Naive thymus-derived CD4-positive, alpha-beta T cell (primary cell): ENCODE measurements at regions of chr10 and their contacts with region 1.

Region 1: DNA sequence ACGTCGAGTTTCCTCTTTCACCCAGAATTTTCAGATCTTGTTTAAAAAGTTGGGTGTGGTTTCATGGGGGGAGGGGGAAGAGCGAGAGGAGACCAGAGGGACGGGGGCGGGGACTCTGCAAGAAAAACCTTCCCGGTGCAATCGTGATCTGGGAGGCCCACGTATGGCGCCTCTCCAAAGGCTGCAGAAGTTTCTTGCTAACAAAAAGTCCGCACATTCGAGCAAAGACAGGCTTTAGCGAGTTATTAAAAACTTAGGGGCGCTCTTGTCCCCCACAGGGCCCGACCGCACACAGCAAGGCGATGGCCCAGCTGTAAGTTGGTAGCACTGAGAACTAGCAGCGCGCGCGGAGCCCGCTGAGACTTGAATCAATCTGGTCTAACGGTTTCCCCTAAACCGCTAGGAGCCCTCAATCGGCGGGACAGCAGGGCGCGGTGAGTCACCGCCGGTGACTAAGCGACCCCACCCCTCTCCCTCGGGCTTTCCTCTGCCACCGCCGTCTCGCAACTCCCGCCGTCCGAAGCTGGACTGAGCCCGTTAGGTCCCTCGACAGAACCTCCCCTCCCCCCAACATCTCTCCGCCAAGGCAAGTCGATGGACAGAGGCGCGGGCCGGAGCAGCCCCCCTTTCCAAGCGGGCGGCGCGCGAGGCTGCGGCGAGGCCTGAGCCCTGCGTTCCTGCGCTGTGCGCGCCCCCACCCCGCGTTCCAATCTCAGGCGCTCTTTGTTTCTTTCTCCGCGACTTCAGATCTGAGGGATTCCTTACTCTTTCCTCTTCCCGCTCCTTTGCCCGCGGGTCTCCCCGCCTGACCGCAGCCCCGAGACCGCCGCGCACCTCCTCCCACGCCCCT is at the start of gene VIM:
- DNase-seq: peak; percentile 72 to 84 (median 81)
- ATAC-seq: peak; percentile 40
- H3K4me3 ChIP-seq: peak within 1 kb of the TSS; percentile 93
- H3K4me3 Mint-ChIP-seq: peak within 1 kb of the TSS; percentile 87 to 100 (median 97)
- H3K27ac ChIP-seq: peak within 1 kb of the TSS; percentile 83
- H3K27ac Mint-ChIP-seq: peak within 1 kb of the TSS; percentile 91 to 100 (median 97)
- H3K4me1 ChIP-seq: peaks cover 34 to 39% of the 10 kb centered on the region in 2 donors
- H3K4me1 Mint-ChIP-seq: peaks cover 25 to 61% (median 55%) of the 10 kb centered on the region in 7 donors
- H3K27me3 ChIP-seq: no peaks in the 10 kb centered on the region
- H3K27me3 Mint-ChIP-seq: peaks cover 0 to 3% (median 0%) of the 10 kb centered on the region in 5 donors
- total RNA-seq, gene VIM: 498 to 2,181 (median 1,002) TPM

Region 2: DNA sequence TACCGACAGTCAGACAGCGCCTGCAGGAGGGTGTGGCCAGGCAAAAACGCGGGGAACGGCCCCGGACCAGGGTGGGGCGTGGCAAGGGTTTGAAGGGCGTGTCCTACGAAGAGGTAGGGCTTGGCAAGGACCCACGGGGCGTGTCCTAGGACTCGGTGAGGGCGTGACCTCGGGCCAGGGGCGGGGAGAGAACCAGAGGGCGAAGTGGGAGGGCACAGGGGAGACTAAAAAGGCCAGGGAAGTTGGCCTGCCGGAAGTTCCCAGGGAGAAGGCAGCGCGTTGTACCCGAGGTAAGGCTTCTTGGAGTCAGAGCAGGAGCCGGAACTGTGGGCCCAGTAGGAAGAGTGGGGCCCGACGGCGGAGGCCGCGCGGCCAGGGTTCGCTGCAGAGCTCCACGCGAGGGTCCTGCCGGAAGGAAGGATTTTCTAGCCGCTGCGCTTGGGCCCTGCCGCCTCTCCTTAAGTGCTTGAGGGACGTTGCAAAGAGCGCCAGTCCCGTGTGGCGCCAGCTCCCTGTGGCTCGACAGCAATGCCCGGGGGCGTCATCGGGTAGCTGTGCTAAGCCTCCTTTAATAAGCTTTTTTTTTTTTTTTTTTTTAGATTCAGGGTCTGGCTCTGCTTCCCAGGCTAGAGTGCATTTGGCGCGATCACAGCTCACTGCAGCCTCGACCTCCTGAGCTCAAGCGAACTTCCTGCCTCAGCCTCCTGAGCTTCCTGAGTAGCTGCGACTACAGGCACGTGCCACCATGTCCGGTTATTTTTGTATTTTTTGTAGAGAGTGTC is 791.4 kb before region 1 on chr10 and contains the start of gene PTER:
- CTCF ChIA-PET with region 1: no interaction called
- POLR2A ChIA-PET with region 1: no interaction called
- intact Hi-C with region 1: loop called in 1 of 2 experiments (anchors 2 kb)
- DNase-seq: peak; percentile 92 to 99 (median 94)
- ATAC-seq: peak; percentile 100
- H3K4me3 ChIP-seq: peak within 1 kb of the TSS; percentile 93
- H3K4me3 Mint-ChIP-seq: peak within 1 kb of the TSS; percentile 91 to 99 (median 96)
- H3K27ac ChIP-seq: peak within 1 kb of the TSS; percentile 77
- H3K27ac Mint-ChIP-seq: peak within 1 kb of the TSS; percentile 87 to 97 (median 94)
- H3K4me1 ChIP-seq: peaks cover 13 to 28% of the 10 kb centered on the region in 2 donors
- H3K4me1 Mint-ChIP-seq: peaks cover 36 to 57% (median 48%) of the 10 kb centered on the region in 7 donors
- H3K27me3 ChIP-seq: no peaks in the 10 kb centered on the region
- H3K27me3 Mint-ChIP-seq: peaks cover 0 to 19% (median 0%) of the 10 kb centered on the region in 5 donors
- total RNA-seq, gene PTER: 12.9 to 23.7 (median 15.3) TPM

Region 3: DNA sequence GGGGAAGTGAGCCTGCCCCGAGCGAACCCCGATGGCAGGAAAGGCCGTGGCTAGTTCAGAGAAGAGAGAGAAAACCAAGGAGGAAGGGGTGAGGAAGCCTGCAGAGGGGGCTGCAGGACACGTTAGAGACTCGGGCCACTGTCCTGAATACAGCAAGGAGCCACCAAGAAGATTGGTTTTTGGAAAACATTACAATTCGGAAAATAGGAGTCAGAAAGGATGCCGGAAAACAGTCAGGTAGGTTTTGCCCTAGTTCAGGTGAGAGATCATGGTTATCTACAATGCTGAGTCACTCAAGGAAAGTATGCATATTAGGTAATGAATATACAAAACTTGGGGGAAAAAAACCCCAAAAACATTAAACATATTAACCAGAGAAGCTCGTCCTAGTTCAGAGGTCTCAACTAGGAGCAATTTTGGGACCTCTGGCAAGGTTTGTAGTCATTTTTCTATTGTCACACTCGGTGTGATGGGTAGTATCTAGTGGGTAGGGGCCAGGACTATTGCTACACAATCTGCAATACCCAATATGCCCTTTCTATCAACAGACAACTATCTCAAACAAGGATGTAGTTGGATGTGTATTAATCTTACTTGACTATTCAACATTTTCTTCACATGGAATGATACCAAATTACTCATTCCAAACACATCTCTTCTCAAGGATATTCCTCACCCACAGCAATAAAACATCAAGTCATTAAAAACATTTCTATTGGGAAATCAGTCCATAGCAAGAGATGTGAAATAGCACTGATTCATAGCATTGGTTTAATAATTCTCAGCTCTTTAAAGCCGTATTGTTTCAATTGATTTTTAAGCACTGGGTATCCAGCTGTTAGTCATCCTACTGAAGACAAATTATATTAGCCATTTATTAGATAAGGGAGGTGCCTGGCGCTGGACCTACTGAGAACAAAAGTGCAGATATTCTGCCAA is 336.7 kb before region 1 on chr10:
- CTCF ChIA-PET with region 1: no interaction called
- POLR2A ChIA-PET with region 1: no interaction called
- intact Hi-C with region 1: loop called in 1 of 2 experiments (anchors 1 kb)
- DNase-seq: peak in 3 of 9 donors; percentile 7 to 18 (median 15)
- ATAC-seq: peak; percentile 69
- H3K4me3 ChIP-seq: no peak overlapping the region
- H3K4me3 Mint-ChIP-seq: peak overlapping the region; percentile 35 to 81 (median 58)
- H3K27ac ChIP-seq: no peak overlapping the region
- H3K27ac Mint-ChIP-seq: peak overlapping the region in 2 of 9 donors; percentile 40 to 49
- H3K4me1 ChIP-seq: no peaks in the 10 kb centered on the region
- H3K4me1 Mint-ChIP-seq: peaks cover 5 to 9% (median 5%) of the 10 kb centered on the region in 7 donors
- H3K27me3 ChIP-seq: no peaks in the 10 kb centered on the region
- H3K27me3 Mint-ChIP-seq: peaks cover 0 to 42% (median 0%) of the 10 kb centered on the region in 5 donors

Region 4: GRCh38 chr10:17144757-17145156 is 83.6 kb before region 1 on chr10:
- CTCF ChIA-PET with region 1: no interaction called
- POLR2A ChIA-PET with region 1: no interaction called
- intact Hi-C with region 1: loop called in 1 of 2 experiments (anchors 1 kb)
- DNase-seq: peak in 1 of 9 donors; percentile 56
- ATAC-seq: no peak
- H3K4me3 ChIP-seq: no peak overlapping the region
- H3K4me3 Mint-ChIP-seq: peak overlapping the region in 1 of 10 donors; percentile 46
- H3K27ac ChIP-seq: no peak overlapping the region
- H3K27ac Mint-ChIP-seq: peak overlapping the region in 4 of 9 donors; percentile 34 to 82 (median 74)
- H3K4me1 ChIP-seq: peaks cover 0 to 5% of the 10 kb centered on the region in 2 donors
- H3K4me1 Mint-ChIP-seq: peaks cover 4 to 32% (median 22%) of the 10 kb centered on the region in 7 donors
- H3K27me3 ChIP-seq: no peaks in the 10 kb centered on the region
- H3K27me3 Mint-ChIP-seq: peaks cover 0 to 2% (median 0%) of the 10 kb centered on the region in 5 donors

Region 5: DNA sequence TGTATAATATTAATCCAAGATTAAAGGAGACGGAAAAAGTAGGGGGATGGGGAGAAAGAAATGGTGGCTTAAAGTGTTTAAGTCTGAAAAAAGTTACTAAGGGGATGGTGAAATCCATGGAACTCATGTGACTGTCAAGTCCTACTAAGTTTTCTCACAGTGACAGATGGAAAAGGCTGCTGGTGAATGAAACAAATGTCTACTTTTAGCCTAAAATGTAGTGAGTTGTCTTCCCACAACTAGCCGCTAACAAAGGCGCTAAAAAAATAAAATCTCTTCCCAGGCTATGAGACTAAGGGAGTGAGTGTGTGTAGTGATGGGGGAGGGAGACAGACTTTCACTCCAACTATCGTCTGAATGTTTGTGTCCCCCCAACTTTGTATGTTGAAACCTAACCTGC is 12.3 kb after region 1 on chr10:
- CTCF ChIA-PET with region 1: interaction called, 10 read pairs
- POLR2A ChIA-PET with region 1: interaction called, 11 read pairs
- intact Hi-C with region 1: loop called in 1 of 2 experiments (anchors 1 kb)
- DNase-seq: no peak
- ATAC-seq: no peak
- H3K4me3 ChIP-seq: no peak overlapping the region
- H3K4me3 Mint-ChIP-seq: no peak overlapping the region
- H3K27ac ChIP-seq: no peak overlapping the region
- H3K27ac Mint-ChIP-seq: peak overlapping the region in 5 of 9 donors; percentile 38 to 70 (median 60)
- H3K4me1 ChIP-seq: peaks cover 0 to 7% of the 10 kb centered on the region in 2 donors
- H3K4me1 Mint-ChIP-seq: peaks cover 5 to 34% (median 24%) of the 10 kb centered on the region in 7 donors
- H3K27me3 ChIP-seq: no peaks in the 10 kb centered on the region
- H3K27me3 Mint-ChIP-seq: no peaks in the 10 kb centered on the region

Region 6: GRCh38 chr10:17643755-17644484 is 415.6 kb after region 1 on chr10 and contains the start of gene STAM:
- CTCF ChIA-PET with region 1: no interaction called
- POLR2A ChIA-PET with region 1: interaction called, 8 read pairs
- intact Hi-C with region 1: loop called (anchors 1 to 10 kb)
- DNase-seq: peak; percentile 88 to 99 (median 94)
- ATAC-seq: peak; percentile 95
- H3K4me3 ChIP-seq: peak within 1 kb of the TSS; percentile 92
- H3K4me3 Mint-ChIP-seq: peak within 1 kb of the TSS; percentile 95 to 99 (median 98)
- H3K27ac ChIP-seq: peak within 1 kb of the TSS; percentile 96
- H3K27ac Mint-ChIP-seq: peak within 1 kb of the TSS; percentile 100
- H3K4me1 ChIP-seq: peaks cover 17 to 35% of the 10 kb centered on the region in 2 donors
- H3K4me1 Mint-ChIP-seq: peaks cover 33 to 71% (median 57%) of the 10 kb centered on the region in 7 donors
- H3K27me3 ChIP-seq: no peaks in the 10 kb centered on the region
- H3K27me3 Mint-ChIP-seq: peaks cover 0 to 3% (median 0%) of the 10 kb centered on the region in 5 donors
- total RNA-seq, gene STAM: 18.3 to 25.4 (median 19.6) TPM